ENCODE measurements at regions of chr5 and their contacts with region 1.

Region 1: GRCh38 chr5:32961059-32961415 is 249.9 kb downstream of the NPR3 start:
- DNase-seq: peak; percentile 18
- H3K4me3 Mint-ChIP-seq: no peak overlapping the region
- H3K27ac Mint-ChIP-seq: peak overlapping the region; percentile 79
- H3K4me1 Mint-ChIP-seq: peaks cover 12% of the 10 kb centered on the region
- H3K27me3 Mint-ChIP-seq: no peaks in the 10 kb centered on the region
- CTCF ChIP-seq: no peak

Region 2: DNA sequence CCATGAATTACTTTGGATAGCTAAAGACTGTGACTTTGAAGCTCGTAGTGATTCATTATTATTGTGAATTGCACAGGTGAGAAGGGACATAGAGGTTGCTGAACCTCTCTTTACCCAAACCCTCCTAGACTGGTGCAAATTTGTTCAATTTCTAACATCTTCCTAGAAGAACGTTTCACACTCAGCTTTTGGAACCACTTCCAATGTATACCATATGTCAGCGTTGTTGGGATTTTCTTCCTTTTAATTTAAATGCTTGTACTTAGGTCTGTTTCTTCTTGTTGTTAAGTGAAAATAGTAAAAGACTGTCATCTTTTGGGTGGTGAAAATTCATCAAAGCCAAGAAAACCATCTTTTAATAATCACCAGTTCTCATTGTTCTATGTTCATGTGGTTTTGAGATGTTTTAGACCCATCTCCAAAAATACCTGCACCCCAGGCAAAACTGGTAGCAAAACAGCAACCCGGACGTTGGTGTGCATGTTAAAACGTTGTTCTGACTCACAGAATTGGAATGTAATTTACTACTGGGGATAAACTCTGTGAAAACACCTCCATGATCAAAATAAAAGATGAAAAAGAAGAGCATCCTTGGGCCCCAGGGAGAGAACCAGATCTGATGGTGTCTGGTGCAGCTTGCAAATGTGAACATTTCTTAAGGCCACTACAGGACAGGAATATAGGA is 11.6 kb before region 1 on chr5:
- CTCF ChIA-PET with region 1: no interaction called
- POLR2A ChIA-PET with region 1: interaction called, 10 read pairs
- intact Hi-C with region 1: no loop called
- DNase-seq: peak; percentile 29
- H3K4me3 Mint-ChIP-seq: no peak overlapping the region
- H3K27ac Mint-ChIP-seq: no peak overlapping the region
- H3K4me1 Mint-ChIP-seq: peaks cover 6% of the 10 kb centered on the region
- H3K27me3 Mint-ChIP-seq: no peaks in the 10 kb centered on the region
- CTCF ChIP-seq: no peak

Region 3: GRCh38 chr5:33330426-33330825 is 369.4 kb after region 1 on chr5:
- CTCF ChIA-PET with region 1: no interaction called
- POLR2A ChIA-PET with region 1: no interaction called
- intact Hi-C with region 1: no loop called
- DNase-seq: no peak
- H3K4me3 Mint-ChIP-seq: no peak overlapping the region
- H3K27ac Mint-ChIP-seq: no peak overlapping the region
- H3K4me1 Mint-ChIP-seq: no peaks in the 10 kb centered on the region
- H3K27me3 Mint-ChIP-seq: no peaks in the 10 kb centered on the region
- CTCF ChIP-seq: no peak